K562 (cell line): ENCODE measurements at regions of chr22 and their contacts with region 1.

Region 1: DNA sequence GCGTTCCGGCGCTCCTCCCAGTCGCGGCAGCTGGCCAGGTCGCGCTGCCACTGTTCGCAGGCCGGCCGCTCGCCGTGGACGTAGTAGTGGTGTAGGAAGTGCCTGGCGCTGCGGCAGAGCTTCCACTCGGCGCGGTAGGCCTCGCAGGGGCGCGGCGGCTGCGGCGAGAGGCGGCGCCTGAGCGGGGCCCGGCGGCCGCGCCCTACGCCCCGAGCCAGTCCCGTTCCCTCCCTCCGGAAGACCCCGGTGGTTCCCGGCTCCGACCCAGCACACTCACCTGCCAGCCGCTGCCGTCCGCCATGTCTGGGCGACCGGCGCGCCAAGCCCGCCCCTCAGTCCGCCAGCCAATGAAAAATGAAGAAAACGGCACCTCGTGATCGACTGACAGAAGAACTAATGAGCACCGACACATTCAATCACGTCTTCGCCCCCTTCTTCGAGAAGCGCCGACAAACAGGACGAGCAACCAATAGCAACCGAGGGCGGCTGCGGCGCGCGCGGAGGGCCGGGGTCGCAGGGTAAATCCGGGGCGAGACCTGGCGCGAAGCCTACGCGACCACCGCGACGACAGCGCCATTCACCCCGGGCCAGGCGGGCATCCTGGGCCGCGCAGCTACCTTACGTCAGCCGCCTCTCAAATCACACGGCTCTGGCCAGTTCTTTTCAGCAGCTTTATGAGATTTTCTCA is at the start of gene C22orf39:
- DNase-seq: peak; percentile 99 to 100 (median 100)
- ATAC-seq: peak; percentile 95
- H3K4me3 ChIP-seq: peak within 1 kb of the TSS; percentile 73
- H3K27ac ChIP-seq: peak within 1 kb of the TSS; percentile 86
- H3K4me1 ChIP-seq: peaks cover 27 to 38% of the 10 kb centered on the region in 2 experiments
- H3K27me3 ChIP-seq: no peaks in the 10 kb centered on the region
- CTCF ChIP-seq: 0 out of 6 replicates have a peak, but pooled peaks of 1 of the 3 experiments have one; percentile 4
- EP300 ChIP-seq: 0 out of 2 replicates have a peak, but pooled peaks have one; percentile 14
- POLR2A ChIP-seq: peak; percentile 97
- RAD21 ChIP-seq: peak; percentile 31 to 47
- polyA plus RNA-seq, gene C22orf39: 20.4 to 25.9 TPM

Region 2: DNA sequence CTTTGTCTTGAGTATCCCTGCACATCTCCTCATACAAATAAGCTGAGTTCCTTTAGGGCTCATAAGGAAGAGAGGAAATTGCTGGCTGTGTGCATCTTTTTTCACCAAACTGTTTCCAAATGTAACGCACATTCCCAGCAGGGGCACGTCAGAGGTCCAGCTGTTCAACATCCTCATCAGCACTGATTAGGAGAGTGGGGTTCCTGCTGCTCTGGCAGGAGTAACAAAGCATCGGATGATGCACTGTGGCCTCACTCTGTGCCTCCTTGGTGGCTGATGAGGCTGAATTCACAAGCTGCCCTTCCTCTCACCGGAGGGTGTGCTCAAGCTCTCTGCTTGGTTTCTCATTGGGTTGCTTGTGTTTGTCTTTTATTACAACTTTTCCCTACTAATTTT is 233.5 kb before region 1 on chr22:
- CTCF ChIA-PET with region 1: no interaction called
- POLR2A ChIA-PET with region 1: no interaction called
- in situ Hi-C with region 1: no loop called
- intact Hi-C with region 1: loop called (anchors 1 kb)
- DNase-seq: peak in 1 of 4 experiments; percentile 38
- ATAC-seq: no peak
- H3K4me3 ChIP-seq: no peak overlapping the region
- H3K27ac ChIP-seq: no peak overlapping the region
- H3K4me1 ChIP-seq: peaks cover 9 to 13% of the 10 kb centered on the region in 2 experiments
- H3K27me3 ChIP-seq: peaks cover 30 to 37% of the 10 kb centered on the region in 2 experiments
- CTCF ChIP-seq: no peak
- EP300 ChIP-seq: no peak
- POLR2A ChIP-seq: no peak
- RAD21 ChIP-seq: 0 out of 4 replicates have a peak, but pooled peaks of 1 of the 2 experiments have one; percentile 9

Region 3: DNA sequence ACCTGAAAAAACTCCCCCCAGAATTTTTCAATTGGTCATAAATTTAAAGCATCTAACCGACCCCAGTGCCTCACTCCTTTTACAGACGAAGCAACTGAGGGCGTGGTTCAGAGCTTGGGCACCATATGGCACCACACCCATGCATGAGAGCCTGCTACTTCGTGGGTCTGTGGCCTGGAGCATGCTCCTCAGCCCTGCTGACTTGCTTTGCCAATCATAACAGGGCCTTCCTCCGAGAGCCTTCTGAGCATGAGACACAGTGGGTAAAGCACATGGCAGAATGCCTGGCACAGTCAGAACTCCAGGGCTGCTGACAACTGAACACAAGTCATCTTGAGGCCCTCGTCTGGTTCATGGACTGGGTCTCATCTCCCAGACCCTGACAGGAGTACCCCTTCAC is 49.3 kb before region 1 on chr22:
- CTCF ChIA-PET with region 1: no interaction called
- POLR2A ChIA-PET with region 1: interaction called, 17 read pairs
- in situ Hi-C with region 1: no loop called
- intact Hi-C with region 1: loop called (anchors 1 kb)
- DNase-seq: no peak
- ATAC-seq: no peak
- H3K4me3 ChIP-seq: no peak overlapping the region
- H3K27ac ChIP-seq: peak overlapping the region; percentile 73
- H3K4me1 ChIP-seq: peaks cover 31 to 33% of the 10 kb centered on the region in 2 experiments
- H3K27me3 ChIP-seq: no peaks in the 10 kb centered on the region
- CTCF ChIP-seq: no peak
- EP300 ChIP-seq: no peak
- POLR2A ChIP-seq: no peak
- RAD21 ChIP-seq: no peak; a peak in 1 of 4 replicates

Region 4: DNA sequence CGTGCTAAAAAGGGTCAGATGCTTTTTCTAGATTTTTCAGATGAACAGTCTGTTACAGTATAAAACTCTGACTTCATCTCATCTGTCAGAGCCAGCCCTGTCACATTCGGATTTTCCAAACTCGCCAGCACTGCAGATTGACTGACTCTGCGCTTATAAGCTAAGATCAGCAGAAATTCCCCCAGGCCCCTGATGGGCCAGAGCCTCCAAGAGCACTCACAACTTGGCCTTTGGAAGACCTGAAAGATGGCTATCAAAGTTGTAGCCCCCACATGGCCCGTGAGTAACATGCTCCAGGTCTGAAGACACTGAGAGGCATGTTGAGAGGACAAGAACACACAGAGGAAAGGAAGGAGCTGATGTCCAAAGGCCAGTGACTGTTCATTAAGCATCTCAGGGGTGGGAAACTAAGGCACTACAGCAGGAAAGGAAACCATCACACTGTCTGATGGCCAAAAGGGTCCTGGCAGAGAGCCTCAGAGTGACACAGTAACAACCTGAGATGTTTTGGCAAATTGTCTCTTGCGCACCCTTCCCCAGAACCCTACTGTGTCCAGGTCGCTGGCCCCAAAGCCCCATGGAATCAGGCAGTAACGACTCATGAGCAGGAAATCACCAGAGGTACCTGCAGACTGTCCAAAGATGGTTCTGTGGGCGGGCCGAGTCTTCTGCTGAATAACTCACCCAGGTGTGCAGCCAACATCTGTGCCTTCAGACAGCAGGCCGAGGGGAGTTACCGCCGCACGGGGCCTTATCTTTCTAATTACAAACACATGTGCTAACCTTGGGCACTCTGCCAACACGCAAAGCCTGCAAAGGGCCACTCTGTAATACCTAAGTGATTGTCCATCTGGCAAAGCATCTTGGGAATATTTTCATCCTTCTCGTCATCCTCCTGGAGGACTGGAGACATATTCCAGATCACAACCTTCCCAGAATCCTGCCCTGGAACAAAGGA is 39.6 kb before region 1 on chr22:
- CTCF ChIA-PET with region 1: no interaction called
- POLR2A ChIA-PET with region 1: interaction called, 10 read pairs
- in situ Hi-C with region 1: no loop called
- intact Hi-C with region 1: loop called (anchors 1 kb)
- DNase-seq: peak; percentile 90 to 96 (median 94)
- ATAC-seq: peak; percentile 76
- H3K4me3 ChIP-seq: no peak overlapping the region
- H3K27ac ChIP-seq: no peak overlapping the region; the same call in 2 of the 3 replicates
- H3K4me1 ChIP-seq: peaks cover 18 to 24% of the 10 kb centered on the region in 2 experiments; a peak in 4 of 5 replicates
- H3K27me3 ChIP-seq: no peaks in the 10 kb centered on the region
- CTCF ChIP-seq: peak in 1 of 3 experiments; percentile 3; a peak in 1 of 6 replicates
- EP300 ChIP-seq: peak; percentile 91
- POLR2A ChIP-seq: peak; percentile 51; the same call in 1 of the 2 replicates
- RAD21 ChIP-seq: no peak; a peak in 1 of 4 replicates

Region 5: GRCh38 chr22:19419464-19420178 is 27.9 kb before region 1 on chr22:
- CTCF ChIA-PET with region 1: no interaction called
- POLR2A ChIA-PET with region 1: interaction called, 40 read pairs
- in situ Hi-C with region 1: no loop called
- intact Hi-C with region 1: loop called (anchors 1 kb)
- DNase-seq: peak; percentile 87 to 96 (median 90)
- ATAC-seq: peak; percentile 68
- H3K4me3 ChIP-seq: no peak overlapping the region
- H3K27ac ChIP-seq: peak overlapping the region; percentile 64
- H3K4me1 ChIP-seq: peaks cover 44 to 50% of the 10 kb centered on the region in 2 experiments
- H3K27me3 ChIP-seq: no peaks in the 10 kb centered on the region
- CTCF ChIP-seq: peak in 1 of 3 experiments; percentile 19; a peak in 2 of 6 replicates
- EP300 ChIP-seq: peak; percentile 98
- POLR2A ChIP-seq: no peak
- RAD21 ChIP-seq: no peak

Region 6: DNA sequence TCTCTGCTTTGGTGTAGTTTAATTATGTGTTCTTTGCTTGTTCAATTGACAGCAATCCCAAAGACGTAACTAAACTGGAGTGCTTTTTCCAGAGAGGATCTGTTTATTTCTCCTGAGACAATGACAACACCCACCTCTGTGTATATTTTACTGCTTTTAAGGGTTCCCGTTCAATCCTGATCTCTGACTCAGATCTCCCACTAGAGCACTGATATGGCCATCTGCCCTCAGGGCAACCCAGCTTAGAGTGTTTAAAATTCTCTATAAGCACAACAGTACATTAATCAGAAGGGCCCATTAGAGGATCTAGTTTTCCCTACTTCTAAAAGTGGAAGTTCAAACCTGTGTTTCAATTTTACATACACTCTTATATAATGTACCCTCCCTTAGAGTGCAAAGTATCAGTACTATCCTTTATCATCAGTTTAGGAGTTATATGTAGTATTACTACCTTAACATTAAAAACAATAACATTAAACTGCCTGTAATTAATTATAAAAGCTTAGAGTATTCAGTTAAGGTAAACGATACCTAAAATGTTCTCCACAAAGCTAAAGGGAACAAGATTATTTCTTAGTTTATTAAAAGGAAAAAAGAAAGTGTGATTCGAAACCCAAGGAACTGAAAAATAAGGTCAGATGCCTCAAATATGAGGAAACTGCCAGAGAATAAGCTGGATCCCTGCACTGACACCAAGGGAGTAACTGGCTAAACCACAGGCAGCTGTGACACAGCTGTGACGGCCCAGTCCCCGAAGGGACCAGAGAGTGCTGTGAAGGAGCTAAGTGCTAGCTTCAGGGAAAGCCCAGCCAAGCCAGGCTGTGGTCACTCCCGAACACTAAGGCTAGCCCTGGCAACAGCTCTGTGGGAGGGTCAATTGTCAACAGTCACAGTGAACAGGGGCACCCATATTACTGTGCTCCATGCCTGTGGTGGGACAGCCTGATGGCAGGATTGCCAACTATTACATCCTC is 16.3 kb after region 1 on chr22:
- CTCF ChIA-PET with region 1: no interaction called
- POLR2A ChIA-PET with region 1: interaction called, 131 read pairs
- in situ Hi-C with region 1: no loop called
- intact Hi-C with region 1: no loop called
- DNase-seq: peak in 1 of 4 experiments; percentile 50
- ATAC-seq: peak; percentile 21
- H3K4me3 ChIP-seq: no peak overlapping the region
- H3K27ac ChIP-seq: no peak overlapping the region
- H3K4me1 ChIP-seq: no peaks in the 10 kb centered on the region
- H3K27me3 ChIP-seq: no peaks in the 10 kb centered on the region
- CTCF ChIP-seq: no peak
- EP300 ChIP-seq: no peak
- POLR2A ChIP-seq: no peak; the same call in 1 of the 2 replicates
- RAD21 ChIP-seq: 0 out of 4 replicates have a peak, but pooled peaks of 1 of the 2 experiments have one; percentile 13

Region 7: GRCh38 chr22:19473578-19473977 is 26.0 kb after region 1 on chr22:
- CTCF ChIA-PET with region 1: no interaction called
- POLR2A ChIA-PET with region 1: interaction called, 131 read pairs
- in situ Hi-C with region 1: no loop called
- intact Hi-C with region 1: no loop called
- DNase-seq: peak in 1 of 4 experiments; percentile 38
- ATAC-seq: peak; percentile 47
- H3K4me3 ChIP-seq: no peak overlapping the region
- H3K27ac ChIP-seq: no peak overlapping the region
- H3K4me1 ChIP-seq: peaks cover 0 to 8% of the 10 kb centered on the region in 2 experiments; a peak in 3 of 5 replicates
- H3K27me3 ChIP-seq: no peaks in the 10 kb centered on the region
- CTCF ChIP-seq: peak; percentile 50 to 55 (median 54); a peak in 5 of 6 replicates
- EP300 ChIP-seq: no peak
- POLR2A ChIP-seq: no peak
- RAD21 ChIP-seq: no peak